Activated naive CD4-positive, alpha-beta T cell treated with anti-CD3 and anti-CD28 coated beads for 36 hours (primary cell): ENCODE measurements at regions of chr3 and their contacts with region 1.

Region 1: DNA sequence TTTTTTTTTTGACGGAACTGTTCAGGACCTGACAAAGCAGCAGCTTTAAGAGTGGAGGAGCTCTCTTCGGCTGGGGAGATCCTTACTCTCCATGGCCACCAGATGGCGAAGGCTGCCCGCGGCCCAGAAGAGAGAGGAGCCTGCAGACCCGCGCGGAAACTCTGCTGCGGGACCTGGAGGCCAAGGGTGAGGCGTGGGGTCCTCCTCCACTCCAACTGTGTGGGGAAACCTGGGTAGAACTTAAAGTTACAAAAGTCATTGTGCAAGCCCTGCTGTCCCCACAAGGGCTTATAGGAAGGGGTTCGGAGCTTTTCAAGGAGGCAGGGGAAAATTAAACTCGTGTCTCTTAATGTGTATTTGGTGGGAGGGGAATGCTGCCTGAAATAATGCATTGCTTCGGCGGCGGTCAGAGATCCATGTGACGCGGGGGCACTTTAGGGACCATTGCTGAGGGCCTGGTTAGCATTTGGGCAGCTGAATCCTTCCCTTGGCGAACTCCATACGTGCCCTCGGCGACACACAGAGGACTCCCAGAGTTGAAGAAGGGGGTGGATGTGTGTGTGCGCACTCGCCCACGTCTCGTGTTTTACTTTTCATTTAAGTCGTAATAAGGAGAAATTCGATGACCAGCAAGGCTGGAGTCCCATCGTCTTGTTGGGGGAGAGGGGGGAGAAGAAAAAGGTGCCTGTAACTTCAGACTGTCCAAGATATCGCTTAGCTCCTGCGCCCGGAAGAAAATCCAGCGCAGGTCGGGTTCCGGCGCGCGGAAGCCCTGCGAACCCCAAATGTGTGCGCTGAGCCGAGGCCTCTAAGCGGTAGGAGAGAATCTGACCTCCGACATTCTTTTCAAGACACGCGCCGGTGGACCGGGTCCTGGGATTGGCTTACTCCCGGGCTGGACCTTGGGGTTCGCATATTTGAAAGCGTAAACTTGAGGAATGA is 9.7 kb downstream of the EOMES start:
- DNase-seq: peak; percentile 81
- H3K4me3 Mint-ChIP-seq: peak overlapping the region; percentile 93
- H3K27ac Mint-ChIP-seq: no peak overlapping the region
- H3K4me1 Mint-ChIP-seq: peaks cover 19% of the 10 kb centered on the region
- H3K27me3 Mint-ChIP-seq: peaks cover 49% of the 10 kb centered on the region

Region 2: GRCh38 chr3:27746838-27747237 is 34.4 kb after region 1 on chr3:
- CTCF ChIA-PET with region 1: no interaction called
- intact Hi-C with region 1: no loop called
- DNase-seq: no peak
- H3K4me3 Mint-ChIP-seq: no peak overlapping the region
- H3K27ac Mint-ChIP-seq: no peak overlapping the region
- H3K4me1 Mint-ChIP-seq: peaks cover 7% of the 10 kb centered on the region
- H3K27me3 Mint-ChIP-seq: no peaks in the 10 kb centered on the region

Region 3: GRCh38 chr3:27880969-27881892 is 168.8 kb after region 1 on chr3:
- CTCF ChIA-PET with region 1: no interaction called
- intact Hi-C with region 1: loop called (anchors 2 kb)
- DNase-seq: peak; percentile 41
- H3K4me3 Mint-ChIP-seq: peak overlapping the region; percentile 73
- H3K27ac Mint-ChIP-seq: peak overlapping the region; percentile 78
- H3K4me1 Mint-ChIP-seq: peaks cover 63% of the 10 kb centered on the region
- H3K27me3 Mint-ChIP-seq: no peaks in the 10 kb centered on the region

Region 4: GRCh38 chr3:27914199-27914598 is 201.8 kb after region 1 on chr3:
- CTCF ChIA-PET with region 1: no interaction called
- intact Hi-C with region 1: no loop called
- DNase-seq: peak; percentile 6
- H3K4me3 Mint-ChIP-seq: no peak overlapping the region
- H3K27ac Mint-ChIP-seq: no peak overlapping the region
- H3K4me1 Mint-ChIP-seq: peaks cover 3% of the 10 kb centered on the region
- H3K27me3 Mint-ChIP-seq: no peaks in the 10 kb centered on the region

Region 5: GRCh38 chr3:28241221-28242160 is 529.1 kb after region 1 on chr3 and contains the start of gene CMC1:
- CTCF ChIA-PET with region 1: no interaction called
- intact Hi-C with region 1: loop called (anchors 2 kb)
- DNase-seq: peak; percentile 97
- H3K4me3 Mint-ChIP-seq: peak within 1 kb of the TSS; percentile 88
- H3K27ac Mint-ChIP-seq: peak within 1 kb of the TSS; percentile 90
- H3K4me1 Mint-ChIP-seq: peaks cover 45% of the 10 kb centered on the region
- H3K27me3 Mint-ChIP-seq: no peaks in the 10 kb centered on the region
- total RNA-seq, gene CMC1: 27.6 to 28.6 TPM

Region 6: DNA sequence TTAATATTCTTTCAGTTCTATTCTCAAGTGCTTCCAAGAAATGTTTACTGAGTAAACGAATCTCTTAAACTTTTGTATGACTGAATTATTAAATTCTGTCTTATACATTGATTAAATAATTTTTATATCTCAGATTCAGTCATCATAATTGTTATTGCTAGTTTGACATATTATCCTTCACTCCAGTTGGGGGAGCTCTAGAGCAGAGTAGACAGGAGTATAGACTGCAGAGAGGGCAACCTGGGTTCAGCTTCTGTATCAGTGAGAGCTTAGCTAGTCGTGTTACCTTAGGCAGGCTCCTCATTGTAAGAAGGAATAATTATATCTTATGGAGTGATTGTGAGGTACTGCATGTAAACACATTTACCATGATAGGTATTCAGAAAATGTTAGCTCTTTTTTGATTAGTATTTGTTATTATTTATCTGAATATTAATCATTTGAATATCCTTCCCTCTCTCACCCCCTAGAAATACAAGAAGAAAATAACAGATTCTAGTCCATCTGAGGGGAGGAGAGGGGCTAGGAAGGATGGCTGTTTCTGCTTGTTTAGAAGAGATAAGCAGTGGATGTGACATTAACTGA is 605.1 kb after region 1 on chr3:
- CTCF ChIA-PET with region 1: interaction called, 10 read pairs
- intact Hi-C with region 1: no loop called
- DNase-seq: peak; percentile 18
- H3K4me3 Mint-ChIP-seq: no peak overlapping the region
- H3K27ac Mint-ChIP-seq: no peak overlapping the region
- H3K4me1 Mint-ChIP-seq: no peaks in the 10 kb centered on the region
- H3K27me3 Mint-ChIP-seq: no peaks in the 10 kb centered on the region

Region 7: GRCh38 chr3:28337230-28337629 is 624.8 kb after region 1 on chr3:
- CTCF ChIA-PET with region 1: interaction called, 10 read pairs
- intact Hi-C with region 1: no loop called
- DNase-seq: no peak
- H3K4me3 Mint-ChIP-seq: no peak overlapping the region
- H3K27ac Mint-ChIP-seq: no peak overlapping the region
- H3K4me1 Mint-ChIP-seq: peaks cover 11% of the 10 kb centered on the region
- H3K27me3 Mint-ChIP-seq: no peaks in the 10 kb centered on the region